SK-N-SH (cell line): ENCODE measurements at regions of chr10 and their contacts with region 1.

Region 1: GRCh38 chr10:111756217-111757061 is 427.1 kb downstream of the GPAM start:
- DNase-seq: peak; percentile 18
- H3K4me3 ChIP-seq: peak overlapping the region in 1 of 2 experiments; percentile 23; a peak in 1 of 4 replicates
- H3K27ac ChIP-seq: no peak overlapping the region
- H3K4me1 ChIP-seq: no peaks in the 10 kb centered on the region
- H3K27me3 ChIP-seq: no peaks in the 10 kb centered on the region
- CTCF ChIP-seq: no peak
- EP300 ChIP-seq: no peak
- RAD21 ChIP-seq: peak; percentile 70

Region 2: DNA sequence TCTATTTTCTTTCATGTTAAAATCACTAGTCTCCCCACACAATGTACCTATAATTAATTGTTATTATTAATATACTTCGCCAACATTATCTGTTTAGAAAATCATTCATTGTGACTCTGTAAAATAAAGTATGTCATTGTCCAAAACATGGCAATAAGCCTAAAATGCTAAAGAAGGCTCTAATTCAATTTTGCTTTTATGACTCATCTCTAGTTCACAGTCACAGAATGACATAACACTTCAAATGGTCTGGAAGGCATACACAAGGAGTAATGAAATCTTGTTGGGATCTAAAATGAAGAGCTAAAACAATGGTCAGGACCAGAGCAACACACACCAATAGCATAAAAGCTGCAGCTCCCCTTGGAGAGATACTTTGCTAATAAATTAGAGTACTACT is 78.7 kb before region 1 on chr10:
- CTCF ChIA-PET with region 1: no interaction called
- POLR2A ChIA-PET with region 1: no interaction called
- DNase-seq: peak; percentile 10
- H3K4me3 ChIP-seq: no peak overlapping the region
- H3K27ac ChIP-seq: no peak overlapping the region
- H3K4me1 ChIP-seq: no peaks in the 10 kb centered on the region
- H3K27me3 ChIP-seq: no peaks in the 10 kb centered on the region
- CTCF ChIP-seq: no peak
- EP300 ChIP-seq: no peak
- RAD21 ChIP-seq: no peak

Region 3: GRCh38 chr10:111766464-111766863 is 10.0 kb after region 1 on chr10:
- CTCF ChIA-PET with region 1: interaction called, 12 read pairs
- POLR2A ChIA-PET with region 1: no interaction called
- DNase-seq: no peak
- H3K4me3 ChIP-seq: no peak overlapping the region
- H3K27ac ChIP-seq: no peak overlapping the region
- H3K4me1 ChIP-seq: no peaks in the 10 kb centered on the region
- H3K27me3 ChIP-seq: no peaks in the 10 kb centered on the region
- CTCF ChIP-seq: no peak
- EP300 ChIP-seq: no peak
- RAD21 ChIP-seq: no peak

Region 4: GRCh38 chr10:111774486-111774885 is 18.0 kb after region 1 on chr10:
- CTCF ChIA-PET with region 1: interaction called, 12 read pairs
- POLR2A ChIA-PET with region 1: no interaction called
- DNase-seq: no peak
- H3K4me3 ChIP-seq: no peak overlapping the region
- H3K27ac ChIP-seq: no peak overlapping the region
- H3K4me1 ChIP-seq: peaks cover 0 to 3% of the 10 kb centered on the region in 2 experiments; a peak in 1 of 4 replicates
- H3K27me3 ChIP-seq: no peaks in the 10 kb centered on the region
- CTCF ChIP-seq: no peak
- EP300 ChIP-seq: no peak
- RAD21 ChIP-seq: no peak

Region 5: DNA sequence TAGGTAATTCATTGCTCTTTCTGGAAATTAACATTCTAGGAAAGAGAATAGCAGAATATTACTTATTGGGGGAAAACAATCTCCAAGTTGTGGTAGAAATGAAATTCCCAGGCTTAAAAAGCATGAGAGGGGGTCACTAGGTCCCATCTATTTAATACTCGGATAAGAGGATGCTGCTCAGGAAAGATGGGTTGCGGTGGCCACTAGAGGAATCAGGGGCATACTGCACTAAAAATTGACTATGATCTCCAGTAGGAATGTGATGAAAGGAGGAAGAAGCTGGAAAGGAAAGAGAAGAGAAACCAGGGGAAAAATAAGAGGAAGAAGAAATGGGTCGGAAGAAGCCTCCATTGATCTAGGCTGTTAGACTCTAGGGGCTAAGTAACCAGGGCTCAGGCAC is 234.3 kb after region 1 on chr10:
- CTCF ChIA-PET with region 1: interaction called, 18 read pairs
- POLR2A ChIA-PET with region 1: no interaction called
- DNase-seq: peak; percentile 28
- H3K4me3 ChIP-seq: no peak overlapping the region
- H3K27ac ChIP-seq: no peak overlapping the region
- H3K4me1 ChIP-seq: peaks cover 0 to 29% of the 10 kb centered on the region in 2 experiments; a peak in 2 of 4 replicates
- H3K27me3 ChIP-seq: no peaks in the 10 kb centered on the region
- CTCF ChIP-seq: no peak
- EP300 ChIP-seq: no peak
- RAD21 ChIP-seq: peak; percentile 56

Region 6: DNA sequence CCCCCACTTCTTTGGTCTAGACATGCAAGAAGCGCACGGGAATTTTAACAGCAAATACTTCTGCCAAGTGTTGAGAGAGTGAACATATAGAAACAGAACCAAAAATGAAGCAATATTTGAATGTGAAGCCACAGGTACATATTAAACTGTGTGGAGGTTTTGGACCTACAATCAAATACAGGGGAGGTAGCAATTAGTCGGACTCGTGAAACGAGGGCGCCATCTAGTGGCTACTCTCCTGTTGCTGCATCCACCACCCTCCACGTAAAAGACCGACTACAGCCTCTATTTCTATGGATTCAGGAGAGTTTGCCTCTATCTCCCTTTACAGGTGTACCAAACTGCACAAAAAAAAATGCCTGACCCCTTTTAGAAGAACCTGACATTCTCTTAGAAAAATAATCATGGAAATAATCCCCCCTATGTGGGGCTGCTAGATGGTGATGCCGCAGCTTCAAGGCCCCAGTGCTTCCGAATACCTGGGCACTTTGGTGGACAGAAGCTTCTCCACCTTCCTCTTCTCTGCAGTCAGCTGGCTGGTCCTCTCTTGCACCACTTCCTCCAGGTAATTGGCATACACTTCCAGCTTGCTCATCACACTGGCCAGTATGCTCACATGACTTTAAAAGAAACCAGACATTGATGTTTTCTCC is 558.5 kb after region 1 on chr10:
- CTCF ChIA-PET with region 1: interaction called, 14 read pairs
- POLR2A ChIA-PET with region 1: no interaction called
- DNase-seq: peak; percentile 76
- H3K4me3 ChIP-seq: no peak overlapping the region; a peak in 1 of 4 replicates
- H3K27ac ChIP-seq: no peak overlapping the region
- H3K4me1 ChIP-seq: peaks cover 0 to 3% of the 10 kb centered on the region in 2 experiments; a peak in 1 of 4 replicates
- H3K27me3 ChIP-seq: no peaks in the 10 kb centered on the region
- CTCF ChIP-seq: peak; percentile 95
- EP300 ChIP-seq: no peak
- RAD21 ChIP-seq: peak; percentile 97